Psoas muscle (tissue), 8 donors: ENCODE measurements at regions of chr6 and their contacts with region 1.

Region 1: DNA sequence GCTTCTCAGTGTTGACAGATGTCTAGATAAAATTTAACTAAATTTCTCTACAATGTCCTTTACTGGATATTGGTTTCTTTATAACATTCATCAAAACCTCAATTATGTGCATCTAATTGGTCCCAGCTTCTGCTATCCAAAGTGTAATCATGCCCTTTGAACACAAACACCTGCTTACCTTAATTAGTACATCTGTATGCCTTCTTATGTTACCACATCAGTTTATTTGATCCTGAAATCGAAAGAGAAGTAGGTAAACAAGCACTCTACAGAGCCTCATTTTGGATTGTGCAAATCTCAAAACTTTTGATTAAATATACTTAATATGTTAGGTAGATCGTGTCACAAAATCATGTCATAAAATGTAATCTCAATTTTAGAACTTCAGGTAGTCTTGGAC is 36.5 kb downstream of the TAB2 start:
- DNase-seq: no peak
- ATAC-seq: no peak
- H3K4me3 ChIP-seq: no peak overlapping the region
- H3K27ac ChIP-seq: no peak overlapping the region
- H3K4me1 ChIP-seq: peaks cover 18% of the 10 kb centered on the region
- H3K27me3 ChIP-seq: no peaks in the 10 kb centered on the region
- CTCF ChIP-seq: no peak

Region 2: DNA sequence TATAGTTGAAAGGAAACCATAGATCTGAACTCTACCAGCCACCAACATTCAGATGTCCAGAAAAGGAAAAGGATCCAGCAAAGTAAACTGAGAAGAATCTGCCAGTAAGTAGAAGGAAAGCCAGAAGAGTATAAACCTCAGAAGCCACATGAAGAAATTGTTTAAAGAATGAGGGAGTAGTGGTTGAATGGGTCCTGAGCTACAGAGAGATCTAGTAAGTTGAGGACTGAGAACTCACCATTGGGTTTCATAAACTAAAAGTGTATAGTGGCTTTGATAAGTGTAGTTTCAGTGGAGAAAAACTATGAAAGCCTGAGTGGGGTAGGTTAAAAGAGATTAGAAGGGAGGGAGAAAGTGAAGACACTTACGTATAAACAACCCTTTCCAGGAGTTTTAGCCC is 14.1 kb after region 1 on chr6:
- intact Hi-C with region 1: no loop called
- DNase-seq: no peak
- ATAC-seq: no peak
- H3K4me3 ChIP-seq: no peak overlapping the region
- H3K27ac ChIP-seq: no peak overlapping the region
- H3K4me1 ChIP-seq: peaks cover 26% of the 10 kb centered on the region
- H3K27me3 ChIP-seq: no peaks in the 10 kb centered on the region
- CTCF ChIP-seq: no peak

Region 3: DNA sequence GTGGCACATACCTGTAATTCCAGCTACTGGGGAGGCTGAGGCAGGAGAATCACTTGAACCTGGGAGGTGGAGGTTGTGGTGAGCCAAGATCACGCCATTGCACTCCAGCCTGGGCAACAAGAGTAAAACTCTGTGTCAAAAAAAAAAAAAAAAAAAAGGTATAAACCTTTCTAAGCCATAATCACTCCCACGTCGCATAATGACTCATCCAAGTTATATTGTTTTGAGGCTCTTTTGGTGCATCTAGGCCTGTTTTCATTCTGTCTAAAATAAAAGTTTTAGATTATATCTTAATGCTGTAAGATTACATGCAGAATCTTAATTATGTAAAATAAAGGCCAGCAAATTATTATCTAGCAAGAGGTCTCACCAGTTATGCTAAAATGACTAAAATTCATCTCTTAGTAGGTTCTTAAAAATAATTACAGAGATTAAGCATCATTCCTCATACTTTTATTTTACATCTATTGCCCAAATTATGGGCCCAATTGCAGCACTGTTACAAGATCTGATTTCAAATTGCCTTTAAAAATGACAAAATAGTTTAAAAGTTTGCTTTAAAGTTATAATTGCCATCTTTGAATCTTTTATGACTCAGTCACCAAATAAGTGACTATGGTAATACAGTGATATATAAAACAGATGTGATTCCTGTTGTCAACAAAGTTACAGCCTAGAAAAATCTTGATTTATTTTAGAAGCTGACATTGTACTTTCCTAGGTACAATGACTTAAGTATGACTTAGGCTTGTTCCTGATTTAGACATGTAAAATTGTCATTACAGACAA is 35.7 kb after region 1 on chr6:
- intact Hi-C with region 1: loop called in 1 of 2 experiments (anchors 5 kb)
- DNase-seq: no peak
- ATAC-seq: peak in 1 of 4 donors; percentile 42
- H3K4me3 ChIP-seq: no peak overlapping the region
- H3K27ac ChIP-seq: no peak overlapping the region
- H3K4me1 ChIP-seq: peaks cover 17% of the 10 kb centered on the region
- H3K27me3 ChIP-seq: no peaks in the 10 kb centered on the region
- CTCF ChIP-seq: no peak